HAP-1 (cell line): ENCODE measurements at regions of chr10 and their contacts with region 1.

Region 1: DNA sequence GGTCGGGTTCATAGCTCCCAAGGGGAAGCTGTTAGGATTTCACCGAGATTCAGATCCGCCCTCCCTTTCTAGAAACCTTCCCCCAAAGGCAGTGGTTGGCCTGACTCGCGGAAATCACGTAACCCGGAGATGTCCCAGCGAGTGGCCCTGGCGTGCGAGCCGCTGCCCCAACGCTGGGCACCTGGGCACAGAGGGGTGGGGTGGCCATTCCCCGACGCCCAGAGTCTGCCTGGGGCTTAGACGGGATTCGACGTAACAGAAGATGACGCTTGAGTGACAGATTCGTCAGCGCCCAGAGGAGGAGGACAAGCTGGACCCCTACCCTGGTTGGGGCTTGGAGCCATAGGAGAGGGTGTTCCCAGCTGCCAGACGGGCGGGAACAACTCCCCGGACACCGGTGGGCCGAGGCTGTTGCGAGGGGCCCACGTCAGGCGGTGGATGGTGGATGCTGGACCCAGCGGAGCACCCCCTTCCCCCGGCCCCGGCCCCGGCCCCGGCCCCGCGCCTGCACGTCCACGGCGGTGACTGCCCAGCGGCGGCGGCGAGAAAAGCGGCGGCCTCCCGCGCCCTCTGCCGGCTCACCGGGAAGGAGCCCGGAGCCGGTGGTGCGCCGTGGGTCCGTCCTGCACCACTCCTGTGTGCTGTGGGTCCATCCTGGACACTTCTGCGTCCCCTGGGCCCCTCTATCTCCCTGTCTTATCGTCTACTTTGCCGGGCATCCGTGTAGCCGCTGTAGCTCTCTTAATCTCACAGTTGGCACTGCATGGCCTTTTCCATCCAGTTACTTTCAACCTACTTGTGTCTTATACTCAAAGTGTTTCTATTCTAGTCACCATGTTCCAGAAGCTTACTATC is 35.4 kb upstream of the KNDC1 start:
- DNase-seq: peak; percentile 8 to 71
- H3K4me3 ChIP-seq: no peak overlapping the region
- H3K4me1 ChIP-seq: no peaks in the 10 kb centered on the region
- H3K27me3 ChIP-seq: peaks cover 13% of the 10 kb centered on the region; the same call in 1 of the 2 replicates

Region 2: DNA sequence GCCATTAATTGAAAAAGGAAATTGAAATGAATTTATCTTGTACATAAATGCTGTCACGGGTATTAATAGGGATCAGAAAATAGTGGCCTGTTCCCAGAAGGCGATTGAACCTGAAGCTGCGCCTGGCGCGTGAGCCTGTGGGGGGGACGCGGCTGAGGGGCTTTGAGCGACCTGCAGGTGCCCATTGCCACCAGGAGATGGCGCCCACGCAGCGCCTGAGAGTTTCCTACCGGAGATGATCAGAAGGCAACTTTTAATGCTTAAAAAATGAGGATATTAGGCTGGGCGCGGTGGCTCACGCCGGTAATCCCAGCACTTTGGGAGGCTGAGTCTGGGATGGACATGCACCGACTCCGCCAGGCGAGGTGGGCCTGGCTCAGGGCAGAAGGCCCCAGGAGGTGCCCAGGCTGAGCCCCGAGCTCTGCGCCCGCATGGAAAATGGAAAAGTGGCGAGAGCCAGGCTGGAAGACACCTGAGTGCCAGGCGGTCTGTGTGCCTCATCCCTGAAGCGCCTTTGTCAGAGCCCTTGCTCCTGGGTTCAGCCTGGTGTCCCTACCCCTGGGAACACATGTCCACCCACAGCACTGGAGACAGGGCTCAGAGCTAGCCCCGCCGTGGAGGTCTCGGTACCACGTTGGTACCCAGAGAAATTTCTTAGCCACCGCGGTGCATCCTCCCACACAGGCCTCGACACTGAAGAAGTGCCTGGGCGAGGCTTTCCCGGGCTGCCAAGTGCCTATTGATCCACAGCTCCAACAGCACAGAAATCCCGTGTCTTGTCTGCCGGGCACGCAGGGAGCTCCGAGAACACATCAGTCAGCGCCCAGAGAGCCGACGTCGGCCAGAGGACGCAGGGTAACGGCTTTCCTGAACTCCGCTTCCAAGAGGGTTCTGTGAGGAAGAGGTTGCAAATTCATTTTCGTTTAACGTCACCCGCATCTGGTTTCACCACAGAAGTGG is 469.6 kb before region 1 on chr10:
- in situ Hi-C with region 1: loop called (anchors 10 kb)
- DNase-seq: peak; percentile 54 to 82
- H3K4me3 ChIP-seq: no peak overlapping the region
- H3K4me1 ChIP-seq: no peaks in the 10 kb centered on the region
- H3K27me3 ChIP-seq: no peaks in the 10 kb centered on the region

Region 3: GRCh38 chr10:132939957-132940790 is 184.4 kb before region 1 on chr10:
- in situ Hi-C with region 1: loop called (anchors 10 kb)
- DNase-seq: peak; percentile 45 to 82
- H3K4me3 ChIP-seq: no peak overlapping the region
- H3K4me1 ChIP-seq: no peaks in the 10 kb centered on the region
- H3K27me3 ChIP-seq: no peaks in the 10 kb centered on the region